ENCODE measurements at regions of chr2 and their contacts with region 1.

Region 1: DNA sequence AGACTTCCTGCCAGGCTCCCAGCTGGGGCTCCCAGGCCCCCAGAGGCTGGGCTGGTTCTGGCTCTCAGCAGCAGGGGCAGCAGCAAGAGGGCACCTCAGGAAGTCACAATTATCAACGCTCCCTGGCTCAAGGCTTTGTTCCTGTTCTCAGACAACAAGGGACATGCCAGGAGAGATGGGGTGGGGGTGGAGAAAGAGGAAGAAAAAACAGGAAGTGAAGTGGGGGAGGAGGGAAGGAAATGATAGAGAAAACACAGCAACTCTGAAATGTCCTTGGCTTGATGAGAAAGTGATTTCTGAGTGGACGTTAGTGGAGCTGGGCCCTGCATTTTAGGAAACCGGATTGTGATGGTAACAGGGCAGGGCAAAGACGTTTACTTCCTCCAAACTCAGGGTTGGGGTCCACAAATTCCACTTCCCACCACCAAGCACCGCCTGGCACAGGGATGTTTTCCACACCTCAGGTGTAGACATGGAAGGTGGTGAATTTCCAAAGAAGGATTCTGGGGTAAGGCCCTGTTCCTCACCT is 40.4 kb downstream of the CYRIA start:
- DNase-seq: peak; percentile 83
- H3K4me3 ChIP-seq: peak overlapping the region; percentile 66
- H3K27ac ChIP-seq: peak overlapping the region; percentile 97
- H3K4me1 ChIP-seq: peaks cover 93% of the 10 kb centered on the region
- CTCF ChIP-seq: 0 out of 2 replicates have a peak, but pooled peaks have one; percentile 23

Region 2: DNA sequence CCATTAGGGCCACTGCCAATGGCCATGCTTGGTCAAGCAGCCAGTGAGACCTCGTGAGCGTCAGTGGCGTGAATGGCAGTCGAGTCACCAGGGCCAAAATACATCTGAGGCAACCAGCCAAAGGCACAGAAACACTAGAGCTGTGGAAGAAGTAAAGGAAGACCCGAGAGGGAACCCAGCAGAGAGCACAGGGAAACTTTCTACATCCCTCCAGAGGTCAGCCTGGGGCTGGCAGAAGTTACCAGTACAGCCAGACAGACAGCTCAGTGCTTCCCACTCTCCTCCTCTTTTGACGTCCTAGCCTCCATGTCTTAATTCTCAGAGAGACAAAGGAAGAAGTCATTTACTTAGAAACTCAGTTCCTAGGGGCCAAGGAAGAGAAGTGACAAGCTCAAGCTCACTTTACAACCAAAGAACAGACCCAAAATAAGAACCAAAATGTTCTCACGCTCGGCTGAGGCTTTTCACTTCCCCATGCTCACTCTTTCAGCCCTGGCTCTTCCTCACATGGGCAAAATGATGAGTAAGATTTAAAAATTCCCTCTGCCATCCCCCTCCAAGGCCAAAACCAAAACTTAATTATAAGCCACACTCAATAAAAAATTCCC is 31.6 kb after region 1 on chr2:
- CTCF ChIA-PET with region 1: interaction called, 149 read pairs
- POLR2A ChIA-PET with region 1: interaction called, 414 read pairs
- intact Hi-C with region 1: loop called (anchors 1 kb)
- DNase-seq: peak; percentile 79
- H3K4me3 ChIP-seq: peak overlapping the region; percentile 48
- H3K27ac ChIP-seq: peak overlapping the region; percentile 87
- H3K4me1 ChIP-seq: peaks cover 95% of the 10 kb centered on the region
- CTCF ChIP-seq: no peak

Region 3: DNA sequence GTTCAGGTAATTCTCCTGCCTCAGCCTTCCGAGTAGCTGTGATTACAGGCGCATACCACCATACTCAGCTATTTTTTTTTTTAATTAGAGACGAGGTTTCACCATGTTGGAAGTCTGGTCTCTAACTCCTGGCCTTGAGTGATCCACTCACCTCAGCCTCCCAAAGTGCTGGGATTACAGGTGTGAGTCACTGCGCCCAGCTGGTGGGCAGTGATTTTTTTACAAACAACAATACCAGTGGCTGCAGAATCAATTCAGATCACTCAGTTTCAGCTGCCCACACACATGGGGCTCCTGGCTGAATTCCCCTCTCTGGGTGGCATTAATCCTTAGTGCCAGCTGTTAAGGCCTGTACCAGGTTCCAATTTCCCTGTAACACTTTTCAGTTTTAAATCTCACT is 53.7 kb after region 1 on chr2:
- CTCF ChIA-PET with region 1: no interaction called
- POLR2A ChIA-PET with region 1: interaction called, 12 read pairs
- intact Hi-C with region 1: no loop called
- DNase-seq: no peak
- H3K4me3 ChIP-seq: no peak overlapping the region
- H3K27ac ChIP-seq: no peak overlapping the region
- H3K4me1 ChIP-seq: peaks cover 31% of the 10 kb centered on the region
- CTCF ChIP-seq: no peak

Region 4: DNA sequence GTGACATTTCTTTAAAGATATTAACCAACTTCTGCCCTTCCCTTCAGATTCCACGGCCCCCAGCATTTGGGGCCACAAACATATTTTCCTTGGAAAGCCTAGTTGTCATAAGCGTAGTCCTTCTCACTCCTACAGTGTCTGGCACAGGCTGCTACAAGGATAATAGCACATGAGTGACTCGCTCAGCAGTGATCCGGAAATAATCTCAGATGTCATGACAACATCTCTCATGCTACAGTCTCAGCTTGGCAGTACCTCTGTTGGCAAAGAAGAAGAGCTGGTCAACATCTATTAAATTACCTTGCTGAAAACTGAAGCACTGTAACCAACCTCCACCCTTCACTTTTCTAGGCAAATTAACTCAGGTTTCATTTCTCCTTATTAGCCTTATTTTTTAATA is 541.2 kb after region 1 on chr2:
- CTCF ChIA-PET with region 1: no interaction called
- POLR2A ChIA-PET with region 1: no interaction called
- intact Hi-C with region 1: loop called (anchors 10 kb)
- DNase-seq: no peak
- H3K4me3 ChIP-seq: no peak overlapping the region
- H3K27ac ChIP-seq: no peak overlapping the region
- H3K4me1 ChIP-seq: no peaks in the 10 kb centered on the region
- CTCF ChIP-seq: no peak

Region 5: DNA sequence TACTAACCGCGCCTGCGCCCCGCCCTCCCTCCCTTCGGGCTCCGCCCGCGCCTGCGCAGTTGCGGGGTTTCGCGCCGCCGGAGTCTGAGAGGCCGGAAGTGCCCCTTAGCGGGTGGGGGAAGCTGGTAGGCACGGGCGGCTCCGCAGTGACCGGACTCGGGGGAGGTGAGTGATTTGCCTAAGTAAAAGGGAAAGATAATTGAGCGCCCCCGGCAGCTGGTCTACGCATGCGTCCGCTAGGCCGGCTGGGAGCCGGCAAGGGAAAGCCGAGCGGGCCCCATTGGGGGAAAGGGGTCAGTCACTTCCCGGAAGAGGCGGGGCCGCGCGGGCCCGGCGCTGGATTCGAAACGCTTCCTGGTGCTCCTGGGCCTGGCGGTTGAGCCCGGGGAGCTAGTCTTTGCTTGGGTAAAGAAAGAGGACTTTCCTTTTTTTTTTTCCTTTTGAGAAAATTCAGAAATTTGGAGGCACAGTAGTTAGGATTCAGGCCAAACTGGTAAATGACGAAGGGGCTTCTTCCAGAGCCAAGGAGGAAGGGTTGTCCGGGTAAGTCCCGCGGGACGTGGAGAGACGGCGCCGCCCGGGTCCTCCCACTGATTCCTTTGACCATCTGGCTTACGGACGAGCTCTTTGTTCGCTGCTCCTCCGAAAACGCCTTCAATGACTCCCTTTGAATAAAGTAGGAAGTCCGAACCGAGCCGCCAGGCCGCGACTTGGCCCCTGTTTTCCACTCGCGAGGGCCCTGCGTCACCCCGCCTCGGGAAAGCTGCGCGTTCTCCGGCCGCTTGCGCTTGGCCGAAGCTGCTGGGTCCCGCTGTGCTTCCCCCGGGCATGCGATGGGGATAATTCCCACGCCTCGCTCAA is 1128.8 kb after region 1 on chr2 and contains the starts of genes GEN1 and SMC6:
- CTCF ChIA-PET with region 1: no interaction called
- POLR2A ChIA-PET with region 1: interaction called, 4 read pairs
- intact Hi-C with region 1: loop called (anchors 5 kb)
- DNase-seq: peak; percentile 97
- H3K4me3 ChIP-seq: peak within 1 kb of the TSS; percentile 98
- H3K27ac ChIP-seq: peak within 1 kb of the TSS; percentile 89
- H3K4me1 ChIP-seq: peaks cover 52% of the 10 kb centered on the region
- CTCF ChIP-seq: no peak
- total RNA-seq, gene GEN1: 37.6 and 52.5 TPM in 2 replicates
- total RNA-seq, gene SMC6: 37.0 and 48.9 TPM in 2 replicates